ENCODE measurements at regions of chr4 and their contacts with region 1.

Region 1: DNA sequence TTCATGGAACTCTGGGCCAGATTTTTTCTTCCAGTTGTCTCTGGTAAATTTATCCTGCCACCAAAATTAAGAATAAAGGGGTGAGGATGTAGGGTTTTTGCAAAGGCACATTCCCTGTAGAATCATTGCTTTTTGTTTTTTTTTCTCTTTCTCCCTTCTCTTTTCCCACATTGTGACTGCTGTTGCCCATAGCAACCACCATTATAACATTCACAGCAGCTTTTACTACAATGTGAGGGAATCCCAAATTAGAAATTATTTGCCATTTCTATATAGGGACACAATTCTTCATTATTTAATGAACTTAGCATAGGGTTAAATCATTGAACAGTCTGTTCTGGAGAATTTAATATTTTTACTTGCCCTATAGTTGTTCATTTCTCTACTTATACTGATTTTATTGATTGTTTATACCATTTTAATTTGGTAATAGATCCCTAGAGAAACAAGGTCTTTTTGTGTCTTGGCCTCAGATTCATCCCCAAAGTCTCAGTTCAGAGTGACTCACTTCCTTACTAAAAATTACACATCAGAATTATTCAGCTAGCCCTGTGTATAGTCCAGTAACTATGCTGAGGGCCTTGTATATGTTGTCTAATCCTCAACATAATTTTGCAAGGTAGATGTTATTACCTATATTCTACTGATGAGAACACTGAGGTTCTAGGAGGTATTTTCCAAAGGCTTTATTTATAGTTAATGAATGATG is 80.8 kb upstream of the ANK2 start:
- DNase-seq: no peak
- CTCF ChIP-seq: no peak

Region 2: GRCh38 chr4:112910109-112910736 is 58.4 kb before region 1 on chr4:
- CTCF ChIA-PET with region 1: no interaction called
- POLR2A ChIA-PET with region 1: no interaction called
- DNase-seq: no peak
- CTCF ChIP-seq: no peak

Region 3: DNA sequence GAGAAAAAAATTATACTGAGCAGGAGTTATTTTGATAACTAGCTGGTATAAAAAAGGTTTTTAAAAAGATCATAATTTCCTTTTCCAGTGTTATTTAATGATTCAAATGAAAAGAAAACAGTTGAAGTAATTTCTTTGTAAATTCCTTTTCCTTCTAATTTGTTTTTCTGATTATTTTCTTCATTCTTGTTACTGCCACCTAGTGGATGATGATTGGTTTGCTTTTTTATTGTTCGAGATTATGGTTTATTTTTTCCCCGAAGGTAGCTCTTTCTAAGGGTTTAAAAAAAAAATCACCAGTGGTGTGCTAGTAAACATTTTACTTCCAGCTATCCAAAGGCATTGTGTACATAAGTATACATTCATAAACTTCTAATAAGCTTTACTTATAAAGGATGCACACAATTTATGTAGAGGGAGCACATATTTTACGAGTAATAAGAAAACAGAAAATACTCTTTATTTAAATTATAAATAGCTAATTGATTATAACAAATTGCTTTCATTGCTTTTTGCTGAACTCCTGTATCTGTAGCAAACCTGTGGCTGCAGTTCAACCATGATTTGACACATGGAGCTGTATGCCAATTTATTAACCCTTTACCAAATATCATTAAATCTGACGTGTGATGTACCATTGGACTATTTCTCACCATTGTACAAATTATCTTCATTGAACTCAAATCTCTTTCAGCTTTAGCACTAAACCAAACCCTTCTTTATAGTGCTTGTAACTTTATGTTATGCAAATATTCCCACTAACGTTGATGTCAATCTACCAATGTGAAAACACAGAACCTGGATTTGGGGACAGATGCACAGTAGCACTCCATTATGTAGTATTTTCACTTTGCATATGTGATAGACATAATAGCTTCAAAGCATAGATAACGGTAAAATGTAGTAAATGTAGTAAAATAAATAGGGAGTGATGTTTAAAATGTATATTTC is 17.0 kb before region 1 on chr4:
- CTCF ChIA-PET with region 1: interaction called, 23 read pairs
- POLR2A ChIA-PET with region 1: no interaction called
- DNase-seq: peak; percentile 20
- CTCF ChIP-seq: peak; percentile 53

Measured in GM10248 (cell line).